Activated CD8-positive, alpha-beta T cell treated with anti-CD3 and anti-CD28 coated beads for 36 hours (primary cell): ENCODE measurements at regions of chr1 and their contacts with region 1.

Region 1: DNA sequence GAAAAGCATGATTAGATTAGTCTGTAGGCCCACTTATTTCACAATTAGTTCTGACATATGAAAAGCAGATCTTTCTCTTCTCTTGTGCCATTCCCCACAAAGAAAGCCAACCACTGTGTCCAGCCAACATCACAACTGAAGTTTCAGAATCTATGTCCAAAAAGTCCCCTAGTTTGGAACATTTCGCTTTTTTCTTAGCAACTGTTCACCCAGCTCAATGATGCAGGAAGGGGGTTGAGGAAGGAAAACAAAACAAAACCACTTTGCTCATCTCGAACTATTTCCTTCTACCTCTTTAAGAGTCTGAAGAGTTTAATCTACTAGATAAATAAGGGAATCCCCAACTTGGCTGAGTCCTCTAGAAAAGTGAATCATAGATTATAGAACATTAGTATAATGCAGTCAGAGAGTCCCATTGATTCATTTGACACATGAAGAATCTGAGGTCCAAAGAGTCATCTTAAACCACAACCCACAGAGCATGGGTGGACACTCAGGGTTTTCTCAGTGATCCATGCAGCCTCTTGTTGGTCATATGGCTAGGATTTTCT is 159.3 kb upstream of the SGIP1 start:
- DNase-seq: peak; percentile 76
- ATAC-seq: peak; percentile 75
- H3K4me3 Mint-ChIP-seq: peak overlapping the region; percentile 60
- H3K27ac Mint-ChIP-seq: peak overlapping the region; percentile 93
- H3K4me1 Mint-ChIP-seq: peaks cover 75% of the 10 kb centered on the region
- H3K27me3 Mint-ChIP-seq: no peaks in the 10 kb centered on the region
- CTCF ChIP-seq: no peak

Region 2: GRCh38 chr1:66265796-66266195 is 108.8 kb before region 1 on chr1:
- CTCF ChIA-PET with region 1: no interaction called
- POLR2A ChIA-PET with region 1: no interaction called
- intact Hi-C with region 1: no loop called
- DNase-seq: no peak
- ATAC-seq: peak; percentile 58
- H3K4me3 Mint-ChIP-seq: no peak overlapping the region
- H3K27ac Mint-ChIP-seq: no peak overlapping the region
- H3K4me1 Mint-ChIP-seq: peaks cover 59% of the 10 kb centered on the region
- H3K27me3 Mint-ChIP-seq: no peaks in the 10 kb centered on the region
- CTCF ChIP-seq: no peak

Region 3: DNA sequence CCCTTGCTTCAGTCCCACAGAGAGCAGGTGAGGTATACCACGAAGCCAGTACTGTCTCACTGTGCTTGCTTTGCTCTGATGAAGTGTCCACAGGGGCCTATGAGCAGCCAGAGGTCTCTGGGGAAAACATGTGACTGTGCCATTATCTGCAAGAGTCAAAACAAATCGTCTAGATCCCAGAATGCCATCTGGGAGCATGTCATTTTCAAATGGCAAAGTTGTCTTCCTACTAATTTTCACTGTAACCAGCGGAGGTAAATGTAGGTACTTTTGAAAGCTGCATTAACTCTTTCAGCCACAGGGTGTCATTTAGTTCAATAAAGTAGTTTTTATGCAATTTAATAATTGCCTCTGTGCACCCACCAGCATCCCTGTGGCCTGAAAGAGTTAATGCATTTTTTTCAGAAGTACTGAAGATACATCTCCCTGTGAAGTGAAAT is 14.3 kb before region 1 on chr1:
- CTCF ChIA-PET with region 1: interaction called, 16 read pairs
- POLR2A ChIA-PET with region 1: interaction called, 6 read pairs
- intact Hi-C with region 1: no loop called
- DNase-seq: peak; percentile 22
- ATAC-seq: peak; percentile 41
- H3K4me3 Mint-ChIP-seq: no peak overlapping the region
- H3K27ac Mint-ChIP-seq: no peak overlapping the region
- H3K4me1 Mint-ChIP-seq: peaks cover 88% of the 10 kb centered on the region
- H3K27me3 Mint-ChIP-seq: no peaks in the 10 kb centered on the region
- CTCF ChIP-seq: peak; percentile 79

Region 4: DNA sequence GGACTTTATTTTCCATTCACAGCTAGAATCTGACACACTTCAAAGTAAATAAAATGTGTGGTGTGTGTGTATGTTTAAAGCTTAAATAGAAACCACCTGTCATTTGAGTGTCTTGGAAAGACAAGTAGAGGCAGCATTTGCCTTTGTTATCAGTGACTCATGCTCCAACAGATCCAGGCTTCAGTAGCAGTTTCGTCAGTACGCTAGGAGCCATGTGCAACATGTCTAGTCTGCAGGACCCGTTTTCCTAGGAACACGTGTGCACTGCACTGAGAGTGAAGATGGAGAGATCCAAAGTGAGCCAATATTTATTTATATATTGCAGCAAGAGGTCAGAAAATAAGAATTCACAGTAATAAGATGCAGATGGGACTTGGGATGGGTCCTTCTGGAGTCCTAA is 201.1 kb after region 1 on chr1:
- CTCF ChIA-PET with region 1: no interaction called
- POLR2A ChIA-PET with region 1: no interaction called
- intact Hi-C with region 1: no loop called
- DNase-seq: no peak
- ATAC-seq: no peak
- H3K4me3 Mint-ChIP-seq: no peak overlapping the region
- H3K27ac Mint-ChIP-seq: no peak overlapping the region
- H3K4me1 Mint-ChIP-seq: no peaks in the 10 kb centered on the region
- H3K27me3 Mint-ChIP-seq: peaks cover 9% of the 10 kb centered on the region
- CTCF ChIP-seq: no peak